ENCODE measurements at regions of chr13 and their contacts with region 1.

Region 1: DNA sequence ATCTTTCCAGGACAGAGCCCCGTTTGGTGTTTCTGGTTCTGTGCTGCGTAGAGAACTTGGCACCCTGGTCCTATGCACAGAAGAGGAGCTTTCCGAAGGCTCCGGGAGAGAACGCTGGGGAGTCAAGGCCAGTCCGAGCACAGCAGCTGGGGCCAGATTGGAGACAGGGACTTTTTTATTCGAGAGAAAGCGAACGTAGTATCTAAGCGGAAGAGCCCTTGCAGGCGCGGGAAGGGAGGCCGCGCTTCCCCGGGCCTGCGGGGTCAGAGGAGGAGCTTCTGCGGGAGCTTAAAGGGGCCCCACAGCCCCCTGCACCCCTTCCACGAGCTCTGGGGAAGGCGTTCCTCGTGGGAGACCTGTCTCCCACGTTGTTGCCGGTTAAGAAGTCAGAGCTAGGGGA is 48.6 kb upstream of the ARHGEF7 start:
- DNase-seq: no peak
- ATAC-seq: no peak
- H3K4me3 ChIP-seq: no peak overlapping the region
- H3K27ac ChIP-seq: no peak overlapping the region
- H3K4me1 ChIP-seq: peaks cover 4% of the 10 kb centered on the region
- H3K27me3 ChIP-seq: peaks cover 0 to 5% of the 10 kb centered on the region in 2 experiments; a peak in 1 of 4 replicates
- CTCF ChIP-seq: no peak
- EP300 ChIP-seq: no peak
- POLR2A ChIP-seq: no peak
- RAD21 ChIP-seq: no peak

Region 2: DNA sequence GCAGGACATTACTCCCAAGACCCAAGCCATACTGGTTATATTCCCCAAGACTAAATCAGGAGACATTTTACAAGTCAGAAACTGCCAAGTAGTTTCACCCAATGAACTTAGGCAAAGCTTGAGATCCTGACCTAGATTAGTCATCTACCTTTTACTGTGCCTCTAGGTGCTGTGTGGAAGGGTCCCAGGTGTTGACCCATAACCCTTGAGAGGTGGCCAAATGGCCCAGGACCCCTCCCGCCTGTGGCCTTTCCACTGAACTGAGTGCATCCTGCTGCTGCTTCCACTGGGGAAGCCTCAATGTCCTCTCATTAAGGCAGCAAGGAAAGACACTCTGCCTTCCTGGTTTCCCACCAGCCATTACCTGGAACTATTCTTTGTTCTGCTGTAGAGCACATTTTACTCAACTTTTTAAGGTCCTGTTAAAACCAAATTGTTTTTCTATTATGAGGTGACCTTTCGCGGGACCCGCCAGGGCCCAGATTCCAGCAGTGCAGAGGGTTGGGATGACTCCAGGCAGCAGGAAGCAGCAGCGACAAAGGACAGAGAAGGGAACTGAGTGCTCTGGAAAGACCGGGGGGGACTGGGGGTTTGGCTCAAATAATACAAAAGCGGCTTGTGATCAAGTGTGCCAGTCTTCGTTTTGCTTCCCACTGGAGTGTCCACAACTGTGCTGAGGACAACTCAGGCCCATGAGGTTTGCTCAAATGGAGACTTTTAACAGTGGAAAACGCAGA is 178.8 kb before region 1 on chr13:
- CTCF ChIA-PET with region 1: no interaction called
- POLR2A ChIA-PET with region 1: no interaction called
- RAD21 ChIA-PET with region 1: no interaction called
- SMC1A ChIA-PET with region 1: no interaction called
- in situ Hi-C with region 1: no loop called
- intact Hi-C with region 1: no loop called
- DNase-seq: no peak
- ATAC-seq: peak; percentile 43
- H3K4me3 ChIP-seq: no peak overlapping the region
- H3K27ac ChIP-seq: no peak overlapping the region
- H3K4me1 ChIP-seq: no peaks in the 10 kb centered on the region
- H3K27me3 ChIP-seq: no peaks in the 10 kb centered on the region
- CTCF ChIP-seq: no peak
- EP300 ChIP-seq: no peak
- POLR2A ChIP-seq: peak; percentile 51; the same call in 1 of the 2 replicates
- RAD21 ChIP-seq: no peak

Region 3: GRCh38 chr13:110915057-110915873 is 151.3 kb before region 1 on chr13 and contains the start of gene ANKRD10:
- CTCF ChIA-PET with region 1: interaction called, 15 read pairs
- POLR2A ChIA-PET with region 1: no interaction called
- RAD21 ChIA-PET with region 1: interaction called, 17 read pairs
- SMC1A ChIA-PET with region 1: interaction called, 3 read pairs
- in situ Hi-C with region 1: no loop called
- intact Hi-C with region 1: no loop called
- DNase-seq: peak; percentile 82
- ATAC-seq: peak; percentile 84
- H3K4me3 ChIP-seq: peak within 1 kb of the TSS; percentile 93
- H3K27ac ChIP-seq: peak within 1 kb of the TSS; percentile 91
- H3K4me1 ChIP-seq: peaks cover 23% of the 10 kb centered on the region
- H3K27me3 ChIP-seq: no peaks in the 10 kb centered on the region
- CTCF ChIP-seq: peak; percentile 67 to 86 (median 84)
- EP300 ChIP-seq: no peak
- POLR2A ChIP-seq: peak; percentile 80
- RAD21 ChIP-seq: peak; percentile 65
- polyA plus RNA-seq, gene ANKRD10: 47.1 to 62.3 TPM

Region 4: GRCh38 chr13:111153279-111153976 is 86.9 kb after region 1 on chr13:
- CTCF ChIA-PET with region 1: interaction called, 12 read pairs
- POLR2A ChIA-PET with region 1: no interaction called
- RAD21 ChIA-PET with region 1: interaction called, 8 read pairs
- SMC1A ChIA-PET with region 1: interaction called, 8 read pairs
- in situ Hi-C with region 1: no loop called
- intact Hi-C with region 1: loop called (anchors 5 kb)
- DNase-seq: no peak
- ATAC-seq: peak; percentile 85
- H3K4me3 ChIP-seq: peak overlapping the region; percentile 88
- H3K27ac ChIP-seq: peak overlapping the region; percentile 81
- H3K4me1 ChIP-seq: no peaks in the 10 kb centered on the region
- H3K27me3 ChIP-seq: no peaks in the 10 kb centered on the region
- CTCF ChIP-seq: peak; percentile 7 to 20 (median 7); a peak in 2 of 6 replicates
- EP300 ChIP-seq: no peak
- POLR2A ChIP-seq: peak; percentile 93
- RAD21 ChIP-seq: peak; percentile 39; the same call in 1 of the 2 replicates

Region 5: DNA sequence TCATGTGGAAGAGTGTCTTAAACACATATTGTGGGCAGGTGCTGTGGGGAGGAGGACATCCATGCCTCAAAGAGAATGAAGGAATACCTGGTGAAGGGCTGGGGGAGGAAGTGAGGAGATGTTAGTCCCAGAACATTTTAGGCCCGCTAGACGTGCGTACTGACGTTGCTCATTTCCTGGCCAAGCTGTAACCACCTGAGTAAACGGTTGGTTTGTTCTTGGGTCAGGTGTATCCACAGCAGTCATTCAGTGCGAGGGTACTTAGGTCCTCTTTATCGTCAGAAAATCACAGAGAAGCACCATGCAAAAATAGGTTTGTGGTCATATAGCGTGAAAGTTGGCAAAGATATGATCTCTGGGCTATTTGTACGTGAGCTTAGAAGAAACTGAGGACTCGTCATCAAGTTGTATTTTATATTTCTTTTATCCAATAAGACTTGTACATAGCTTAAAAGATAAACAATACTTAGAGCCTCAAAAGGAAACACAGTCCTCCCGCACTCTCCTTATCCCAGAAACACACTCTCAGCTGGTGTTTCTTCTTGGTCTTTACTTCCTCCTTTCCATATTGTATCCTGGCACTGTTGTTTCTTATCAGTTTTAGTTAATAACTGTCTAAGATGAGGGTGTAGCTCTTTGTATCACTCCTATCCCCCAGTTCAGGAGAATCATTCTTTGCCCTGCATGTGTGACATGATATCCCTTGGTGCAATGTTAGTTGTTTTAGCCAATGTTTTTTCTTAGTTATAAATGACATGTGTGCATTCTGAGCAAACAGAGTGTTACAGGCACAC is 100.5 kb after region 1 on chr13:
- CTCF ChIA-PET with region 1: no interaction called
- POLR2A ChIA-PET with region 1: no interaction called
- RAD21 ChIA-PET with region 1: no interaction called
- SMC1A ChIA-PET with region 1: no interaction called
- in situ Hi-C with region 1: no loop called
- intact Hi-C with region 1: no loop called
- DNase-seq: no peak
- ATAC-seq: peak; percentile 33
- H3K4me3 ChIP-seq: no peak overlapping the region
- H3K27ac ChIP-seq: peak overlapping the region; percentile 66
- H3K4me1 ChIP-seq: peaks cover 43% of the 10 kb centered on the region
- H3K27me3 ChIP-seq: no peaks in the 10 kb centered on the region
- CTCF ChIP-seq: no peak
- EP300 ChIP-seq: no peak
- POLR2A ChIP-seq: no peak
- RAD21 ChIP-seq: no peak

Region 6: GRCh38 chr13:111210544-111211469 is 144.3 kb after region 1 on chr13:
- CTCF ChIA-PET with region 1: interaction called, 99 read pairs
- POLR2A ChIA-PET with region 1: no interaction called
- RAD21 ChIA-PET with region 1: interaction called, 43 read pairs
- SMC1A ChIA-PET with region 1: interaction called, 45 read pairs
- in situ Hi-C with region 1: loop called (anchors 5 kb)
- intact Hi-C with region 1: no loop called
- DNase-seq: no peak
- ATAC-seq: no peak
- H3K4me3 ChIP-seq: no peak overlapping the region
- H3K27ac ChIP-seq: no peak overlapping the region
- H3K4me1 ChIP-seq: peaks cover 7% of the 10 kb centered on the region
- H3K27me3 ChIP-seq: no peaks in the 10 kb centered on the region
- CTCF ChIP-seq: no peak
- EP300 ChIP-seq: no peak
- POLR2A ChIP-seq: no peak
- RAD21 ChIP-seq: no peak

Region 7: GRCh38 chr13:111225810-111226546 is 159.4 kb after region 1 on chr13:
- CTCF ChIA-PET with region 1: interaction called, 65 read pairs
- POLR2A ChIA-PET with region 1: no interaction called
- RAD21 ChIA-PET with region 1: interaction called, 25 read pairs
- SMC1A ChIA-PET with region 1: interaction called, 32 read pairs
- in situ Hi-C with region 1: no loop called
- intact Hi-C with region 1: loop called (anchors 2 kb)
- DNase-seq: no peak
- ATAC-seq: no peak; the same call in 1 of the 3 replicates
- H3K4me3 ChIP-seq: no peak overlapping the region
- H3K27ac ChIP-seq: no peak overlapping the region
- H3K4me1 ChIP-seq: no peaks in the 10 kb centered on the region
- H3K27me3 ChIP-seq: no peaks in the 10 kb centered on the region
- CTCF ChIP-seq: no peak
- EP300 ChIP-seq: no peak
- POLR2A ChIP-seq: no peak
- RAD21 ChIP-seq: no peak

Region 8: DNA sequence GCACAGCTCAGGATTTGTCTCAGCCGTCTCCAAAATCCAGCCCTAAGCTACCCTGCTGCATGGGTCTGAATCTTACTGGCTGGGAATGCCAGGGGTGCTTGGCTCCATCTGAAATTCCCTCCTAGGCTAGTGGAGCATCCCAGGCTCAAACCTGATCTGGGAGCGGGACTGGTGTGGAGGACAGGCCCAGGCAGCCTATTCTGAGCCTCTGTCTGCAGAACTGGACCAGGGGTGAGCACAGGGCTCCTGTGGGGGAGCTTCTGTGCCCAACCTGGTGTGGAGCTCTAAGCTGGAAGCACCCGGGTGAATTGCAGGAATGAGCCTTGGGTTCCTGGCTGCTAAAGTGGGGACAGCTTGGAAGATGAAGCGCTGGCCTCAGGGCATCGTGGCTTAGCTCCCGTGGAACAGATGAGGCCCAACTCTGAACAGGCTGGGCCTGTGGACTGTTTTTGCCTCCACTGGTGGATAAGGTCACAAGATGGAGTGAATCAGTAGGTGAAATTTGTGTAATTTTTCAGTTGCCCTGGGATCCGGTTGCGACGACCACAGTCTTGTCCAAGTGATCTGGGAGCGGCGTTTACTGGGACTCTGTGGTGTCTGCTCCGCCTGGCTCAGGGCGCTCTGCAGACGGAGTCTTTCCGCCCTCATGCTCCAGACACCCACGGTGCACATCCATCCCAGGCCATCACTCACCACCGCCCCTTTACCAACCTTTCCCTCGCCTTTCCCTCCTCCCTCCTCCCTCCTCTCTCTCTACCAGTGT is 333.4 kb after region 1 on chr13:
- CTCF ChIA-PET with region 1: interaction called, 26 read pairs
- POLR2A ChIA-PET with region 1: no interaction called
- RAD21 ChIA-PET with region 1: interaction called, 10 read pairs
- SMC1A ChIA-PET with region 1: no interaction called
- in situ Hi-C with region 1: no loop called
- intact Hi-C with region 1: loop called (anchors 5 kb)
- DNase-seq: no peak
- ATAC-seq: no peak
- H3K4me3 ChIP-seq: no peak overlapping the region
- H3K27ac ChIP-seq: no peak overlapping the region
- H3K4me1 ChIP-seq: no peaks in the 10 kb centered on the region
- H3K27me3 ChIP-seq: no peaks in the 10 kb centered on the region
- CTCF ChIP-seq: no peak
- EP300 ChIP-seq: no peak
- POLR2A ChIP-seq: no peak
- RAD21 ChIP-seq: no peak

Region 9: GRCh38 chr13:111437856-111438547 is 371.5 kb after region 1 on chr13:
- CTCF ChIA-PET with region 1: interaction called, 21 read pairs
- POLR2A ChIA-PET with region 1: no interaction called
- RAD21 ChIA-PET with region 1: interaction called, 15 read pairs
- SMC1A ChIA-PET with region 1: interaction called, 6 read pairs
- in situ Hi-C with region 1: no loop called
- intact Hi-C with region 1: no loop called
- DNase-seq: no peak
- ATAC-seq: no peak
- H3K4me3 ChIP-seq: no peak overlapping the region
- H3K27ac ChIP-seq: no peak overlapping the region
- H3K4me1 ChIP-seq: no peaks in the 10 kb centered on the region
- H3K27me3 ChIP-seq: no peaks in the 10 kb centered on the region
- CTCF ChIP-seq: no peak
- EP300 ChIP-seq: no peak
- POLR2A ChIP-seq: no peak
- RAD21 ChIP-seq: no peak

Region 10: GRCh38 chr13:111947026-111947810 is 880.7 kb after region 1 on chr13:
- CTCF ChIA-PET with region 1: no interaction called
- POLR2A ChIA-PET with region 1: no interaction called
- RAD21 ChIA-PET with region 1: no interaction called
- SMC1A ChIA-PET with region 1: no interaction called
- in situ Hi-C with region 1: no loop called
- intact Hi-C with region 1: no loop called
- DNase-seq: no peak
- ATAC-seq: no peak
- H3K4me3 ChIP-seq: no peak overlapping the region
- H3K27ac ChIP-seq: no peak overlapping the region
- H3K4me1 ChIP-seq: no peaks in the 10 kb centered on the region
- H3K27me3 ChIP-seq: no peaks in the 10 kb centered on the region
- CTCF ChIP-seq: no peak
- EP300 ChIP-seq: no peak
- POLR2A ChIP-seq: no peak
- RAD21 ChIP-seq: no peak